Activated CD8-positive, alpha-beta T cell treated with anti-CD3 and anti-CD28 coated beads for 36 hours (primary cell): ENCODE measurements at regions of chr6 and their contacts with region 1.

Region 1: GRCh38 chr6:131627724-131628682 is at the start of gene MED23:
- DNase-seq: peak; percentile 95
- ATAC-seq: peak; percentile 94
- H3K4me3 Mint-ChIP-seq: peak within 1 kb of the TSS; percentile 99
- H3K27ac Mint-ChIP-seq: peak within 1 kb of the TSS; percentile 96
- H3K4me1 Mint-ChIP-seq: peaks cover 31% of the 10 kb centered on the region
- H3K27me3 Mint-ChIP-seq: no peaks in the 10 kb centered on the region
- CTCF ChIP-seq: peak; percentile 88
- total RNA-seq, gene MED23: 23.9 to 25.3 TPM

Region 2: GRCh38 chr6:130885392-130886192 is 742.4 kb before region 1 on chr6:
- CTCF ChIA-PET with region 1: interaction called, 17 read pairs
- POLR2A ChIA-PET with region 1: no interaction called
- intact Hi-C with region 1: no loop called
- DNase-seq: peak; percentile 82
- ATAC-seq: peak; percentile 77
- H3K4me3 Mint-ChIP-seq: no peak overlapping the region
- H3K27ac Mint-ChIP-seq: no peak overlapping the region
- H3K4me1 Mint-ChIP-seq: no peaks in the 10 kb centered on the region
- H3K27me3 Mint-ChIP-seq: no peaks in the 10 kb centered on the region
- CTCF ChIP-seq: peak; percentile 96

Region 3: DNA sequence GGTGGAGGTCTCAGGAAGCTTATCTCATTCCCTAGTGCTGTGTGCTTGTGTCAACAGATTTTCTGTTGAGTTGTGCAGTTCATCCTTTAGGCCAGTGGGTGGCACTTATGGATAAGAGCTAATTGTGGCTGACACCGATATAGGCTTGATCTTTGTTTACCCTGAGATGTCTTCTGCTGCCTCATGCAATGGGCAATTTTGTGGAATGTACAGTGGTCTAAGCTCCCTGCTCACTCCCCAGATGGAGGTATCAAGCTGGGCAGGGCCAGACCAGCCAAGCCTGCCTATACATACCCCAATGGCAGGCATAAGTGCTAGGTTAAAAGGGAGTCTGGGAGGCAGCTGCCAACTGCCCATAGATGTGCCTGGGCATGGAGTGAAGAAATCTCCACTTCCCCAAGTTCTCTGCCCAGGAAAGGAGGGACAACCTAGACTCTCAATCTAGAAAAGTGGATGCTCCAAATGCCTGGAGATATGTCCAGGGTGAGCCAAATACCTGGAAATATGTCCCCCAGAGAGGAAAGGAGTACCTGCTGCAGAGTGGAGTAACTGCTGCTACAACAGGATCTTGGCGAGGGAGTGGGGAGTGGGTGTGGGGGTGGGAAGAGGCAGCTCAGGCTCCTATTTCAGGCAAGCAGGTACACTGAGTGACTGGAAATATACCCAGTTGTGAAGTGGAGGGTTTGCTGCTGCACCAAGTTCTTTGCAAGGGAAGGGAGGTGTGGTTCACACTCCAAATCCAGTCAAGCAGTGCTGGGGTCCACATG is 108.2 kb before region 1 on chr6:
- CTCF ChIA-PET with region 1: interaction called, 16 read pairs
- POLR2A ChIA-PET with region 1: no interaction called
- intact Hi-C with region 1: no loop called
- DNase-seq: peak; percentile 72
- ATAC-seq: peak; percentile 99
- H3K4me3 Mint-ChIP-seq: no peak overlapping the region
- H3K27ac Mint-ChIP-seq: no peak overlapping the region
- H3K4me1 Mint-ChIP-seq: peaks cover 16% of the 10 kb centered on the region
- H3K27me3 Mint-ChIP-seq: no peaks in the 10 kb centered on the region
- CTCF ChIP-seq: peak; percentile 61

Region 4: DNA sequence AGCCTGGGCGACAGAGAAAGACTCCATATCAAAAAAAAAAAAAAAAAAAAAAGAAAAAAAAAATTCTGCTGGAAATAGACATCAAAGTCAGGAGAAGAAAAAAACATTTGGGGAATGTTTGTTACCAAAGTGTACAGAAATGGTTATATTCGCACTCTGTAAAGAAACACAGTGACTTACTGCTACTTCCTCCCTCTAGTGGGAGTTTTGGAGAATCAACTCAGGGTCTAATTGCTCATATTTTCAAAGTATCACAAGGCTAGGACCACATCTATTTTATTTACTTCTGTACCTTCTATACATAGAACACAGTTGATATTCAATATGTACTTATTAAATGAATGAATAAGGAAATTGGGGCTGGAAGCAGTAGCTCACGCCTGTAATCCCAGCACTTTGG is 30.6 kb before region 1 on chr6:
- CTCF ChIA-PET with region 1: interaction called, 10 read pairs
- POLR2A ChIA-PET with region 1: interaction called, 3 read pairs
- intact Hi-C with region 1: no loop called
- DNase-seq: no peak
- ATAC-seq: no peak
- H3K4me3 Mint-ChIP-seq: no peak overlapping the region
- H3K27ac Mint-ChIP-seq: no peak overlapping the region
- H3K4me1 Mint-ChIP-seq: no peaks in the 10 kb centered on the region
- H3K27me3 Mint-ChIP-seq: no peaks in the 10 kb centered on the region
- CTCF ChIP-seq: peak; percentile 26

Region 5: GRCh38 chr6:131615275-131615674 is 12.7 kb before region 1 on chr6:
- CTCF ChIA-PET with region 1: interaction called, 36 read pairs
- POLR2A ChIA-PET with region 1: interaction called, 8 read pairs
- intact Hi-C with region 1: no loop called
- DNase-seq: no peak
- ATAC-seq: no peak
- H3K4me3 Mint-ChIP-seq: no peak overlapping the region
- H3K27ac Mint-ChIP-seq: no peak overlapping the region
- H3K4me1 Mint-ChIP-seq: peaks cover 2% of the 10 kb centered on the region
- H3K27me3 Mint-ChIP-seq: no peaks in the 10 kb centered on the region
- CTCF ChIP-seq: no peak

Region 6: GRCh38 chr6:131652472-131652871 is 24.5 kb after region 1 on chr6:
- CTCF ChIA-PET with region 1: interaction called, 10 read pairs
- POLR2A ChIA-PET with region 1: no interaction called
- intact Hi-C with region 1: no loop called
- DNase-seq: no peak
- ATAC-seq: no peak
- H3K4me3 Mint-ChIP-seq: no peak overlapping the region
- H3K27ac Mint-ChIP-seq: no peak overlapping the region
- H3K4me1 Mint-ChIP-seq: no peaks in the 10 kb centered on the region
- H3K27me3 Mint-ChIP-seq: peaks cover 2% of the 10 kb centered on the region
- CTCF ChIP-seq: no peak

Region 7: DNA sequence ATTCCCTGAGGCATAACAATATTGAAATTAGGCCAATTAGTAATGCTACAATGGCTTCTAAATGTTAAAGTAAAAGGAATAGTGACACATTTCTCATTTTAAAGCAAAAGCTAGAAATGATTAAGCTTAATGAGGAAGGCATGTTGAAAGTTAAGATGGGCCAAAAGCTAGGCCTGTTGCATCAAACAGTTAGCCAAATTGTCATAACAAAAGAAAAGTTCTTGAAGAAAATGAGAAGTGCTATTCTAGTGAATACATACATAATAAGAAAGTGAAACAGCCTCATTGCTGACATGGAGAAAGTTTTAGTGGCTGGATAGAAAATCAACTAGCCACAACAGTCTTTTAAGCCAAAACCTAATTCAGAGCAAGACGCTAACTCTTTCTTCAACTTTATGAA is 60.3 kb after region 1 on chr6:
- CTCF ChIA-PET with region 1: interaction called, 24 read pairs
- POLR2A ChIA-PET with region 1: no interaction called
- intact Hi-C with region 1: no loop called
- DNase-seq: peak; percentile 7
- ATAC-seq: peak; percentile 66
- H3K4me3 Mint-ChIP-seq: no peak overlapping the region
- H3K27ac Mint-ChIP-seq: no peak overlapping the region
- H3K4me1 Mint-ChIP-seq: peaks cover 13% of the 10 kb centered on the region
- H3K27me3 Mint-ChIP-seq: peaks cover 2% of the 10 kb centered on the region
- CTCF ChIP-seq: no peak